ENCODE measurements at regions of chr5 and their contacts with region 1.

Region 1: DNA sequence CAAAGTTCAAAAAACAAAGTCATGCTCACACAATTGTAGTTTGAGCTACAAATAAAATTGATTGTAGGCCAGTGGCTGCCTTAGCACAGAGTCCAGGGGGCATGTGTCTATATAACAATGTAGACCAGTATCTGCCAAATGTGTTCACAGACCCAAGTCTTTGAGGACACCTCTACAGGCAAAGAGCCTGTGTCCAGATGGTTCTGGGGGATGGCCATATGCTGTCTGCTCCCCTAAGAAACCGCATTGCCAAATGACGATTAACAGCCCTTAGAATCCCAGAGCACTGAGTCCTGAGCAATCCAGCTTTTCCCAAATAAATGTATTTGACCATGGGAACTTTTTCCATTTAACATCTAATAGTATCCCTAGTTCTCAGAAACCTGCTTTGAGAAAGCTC is 169.6 kb downstream of the ADCY2 start:
- DNase-seq: no peak
- CTCF ChIP-seq: no peak

Region 2: DNA sequence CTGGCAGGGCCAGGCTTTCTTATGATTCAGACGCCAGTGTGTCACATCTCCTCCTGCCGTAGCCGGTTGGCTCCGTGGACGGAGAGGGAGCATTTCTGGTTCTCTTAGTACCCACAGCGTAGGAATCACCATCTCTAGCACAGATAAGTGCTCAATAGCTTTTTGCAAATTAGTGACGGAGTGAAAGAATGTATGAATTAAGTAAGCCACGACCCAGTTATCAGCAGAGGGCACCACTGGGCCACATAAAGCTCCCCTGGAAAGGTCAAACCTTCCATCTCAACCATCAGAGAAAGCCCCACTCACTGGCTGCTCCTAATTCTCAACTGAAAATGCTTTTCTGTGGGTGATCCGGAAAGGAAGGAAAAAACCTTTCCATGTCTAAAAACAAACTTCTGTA is 486.7 kb before region 1 on chr5:
- CTCF ChIA-PET with region 1: no interaction called
- POLR2A ChIA-PET with region 1: no interaction called
- DNase-seq: no peak
- CTCF ChIP-seq: no peak

Region 3: DNA sequence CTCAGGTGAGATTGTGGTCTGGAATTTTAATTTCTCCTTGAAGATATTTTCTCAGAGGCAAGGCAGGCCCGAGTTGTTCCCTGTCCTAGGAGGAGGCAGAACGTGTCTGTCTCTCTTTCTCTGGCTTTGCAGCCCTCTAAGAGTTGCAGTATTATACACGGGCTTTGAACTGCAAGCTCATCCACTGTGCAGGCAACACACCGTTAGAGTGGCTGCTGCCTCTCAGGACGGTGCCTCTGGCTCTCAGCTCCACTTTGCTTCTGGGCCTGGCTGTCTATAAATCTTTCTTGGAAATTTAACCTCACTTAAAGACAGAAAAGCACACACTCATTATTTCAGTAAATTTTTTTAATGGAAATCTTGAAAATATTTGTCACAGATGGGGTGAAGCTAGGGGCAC is 339.7 kb before region 1 on chr5:
- CTCF ChIA-PET with region 1: no interaction called
- POLR2A ChIA-PET with region 1: no interaction called
- DNase-seq: no peak
- CTCF ChIP-seq: no peak

Region 4: DNA sequence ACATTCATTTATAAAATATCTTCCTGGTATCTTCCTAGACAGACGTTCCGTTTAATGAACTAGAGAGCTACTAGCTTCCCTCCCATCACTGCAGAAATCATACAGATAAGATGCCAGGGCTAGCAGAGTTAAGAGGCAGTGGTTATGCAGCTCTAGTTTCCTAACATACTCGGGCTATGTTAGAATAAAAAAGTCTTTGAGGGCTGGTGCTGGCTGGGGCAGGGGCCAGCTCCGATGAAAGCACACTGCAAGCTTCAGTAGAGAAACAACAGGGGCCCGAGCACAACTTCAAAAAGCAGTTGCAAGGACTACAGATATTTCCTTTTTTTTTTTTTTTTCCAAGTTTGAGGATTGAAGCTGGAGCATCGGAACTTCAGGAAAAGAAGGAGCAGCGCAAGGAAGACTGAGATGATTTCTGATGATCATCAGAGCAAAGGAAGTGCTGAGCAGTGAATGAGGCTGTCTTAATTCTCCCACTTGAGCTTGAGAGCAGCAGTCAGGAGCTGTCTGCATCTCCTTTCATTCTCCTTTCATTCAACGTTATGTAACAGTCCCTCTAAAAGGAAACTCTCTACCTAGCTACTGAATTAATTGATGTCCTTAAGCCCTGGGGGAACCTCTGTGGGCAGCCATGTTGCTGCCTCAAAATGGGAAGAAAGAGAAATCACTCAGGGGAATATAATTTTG is 217.2 kb before region 1 on chr5:
- CTCF ChIA-PET with region 1: no interaction called
- POLR2A ChIA-PET with region 1: no interaction called
- DNase-seq: no peak
- CTCF ChIP-seq: no peak

Region 5: DNA sequence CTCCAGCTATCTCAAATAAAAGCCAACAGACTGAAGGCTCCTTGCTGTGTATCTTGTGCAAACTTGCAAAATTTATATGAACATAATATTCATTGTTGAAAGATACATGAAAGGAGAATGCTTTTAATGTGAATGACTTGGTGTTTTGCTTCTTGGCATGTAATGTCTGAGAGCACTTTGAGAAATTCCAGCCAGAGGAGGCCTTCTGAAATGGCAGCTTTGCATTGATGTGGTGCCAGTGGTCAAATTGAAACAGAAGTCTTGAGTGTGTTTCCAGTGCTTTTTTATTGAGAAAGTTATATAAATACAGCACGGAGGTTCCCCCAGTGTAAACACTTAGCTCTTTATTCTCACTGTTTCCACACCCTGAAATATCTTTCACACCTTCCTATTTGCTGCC is 12.5 kb after region 1 on chr5:
- CTCF ChIA-PET with region 1: interaction called, 10 read pairs
- POLR2A ChIA-PET with region 1: no interaction called
- DNase-seq: no peak
- CTCF ChIP-seq: no peak

Measured in GM10248 (cell line).